Right lobe of liver (tissue), 6 donors: ENCODE measurements at regions of chr5 and their contacts with region 1.

Region 1: GRCh38 chr5:174793684-174794328 is 69.4 kb downstream of the MSX2 start:
- DNase-seq: peak; percentile 54 to 64 (median 59)
- ATAC-seq: peak; percentile 80 to 92 (median 85)
- H3K4me3 ChIP-seq: no peak overlapping the region
- H3K27ac ChIP-seq: no peak overlapping the region
- H3K4me1 ChIP-seq: no peaks in the 10 kb centered on the region
- H3K27me3 ChIP-seq: peaks cover 0 to 12% of the 10 kb centered on the region in 2 donors
- CTCF ChIP-seq: peak; percentile 63 to 86 (median 79)
- POLR2A ChIP-seq: no peak

Region 2: DNA sequence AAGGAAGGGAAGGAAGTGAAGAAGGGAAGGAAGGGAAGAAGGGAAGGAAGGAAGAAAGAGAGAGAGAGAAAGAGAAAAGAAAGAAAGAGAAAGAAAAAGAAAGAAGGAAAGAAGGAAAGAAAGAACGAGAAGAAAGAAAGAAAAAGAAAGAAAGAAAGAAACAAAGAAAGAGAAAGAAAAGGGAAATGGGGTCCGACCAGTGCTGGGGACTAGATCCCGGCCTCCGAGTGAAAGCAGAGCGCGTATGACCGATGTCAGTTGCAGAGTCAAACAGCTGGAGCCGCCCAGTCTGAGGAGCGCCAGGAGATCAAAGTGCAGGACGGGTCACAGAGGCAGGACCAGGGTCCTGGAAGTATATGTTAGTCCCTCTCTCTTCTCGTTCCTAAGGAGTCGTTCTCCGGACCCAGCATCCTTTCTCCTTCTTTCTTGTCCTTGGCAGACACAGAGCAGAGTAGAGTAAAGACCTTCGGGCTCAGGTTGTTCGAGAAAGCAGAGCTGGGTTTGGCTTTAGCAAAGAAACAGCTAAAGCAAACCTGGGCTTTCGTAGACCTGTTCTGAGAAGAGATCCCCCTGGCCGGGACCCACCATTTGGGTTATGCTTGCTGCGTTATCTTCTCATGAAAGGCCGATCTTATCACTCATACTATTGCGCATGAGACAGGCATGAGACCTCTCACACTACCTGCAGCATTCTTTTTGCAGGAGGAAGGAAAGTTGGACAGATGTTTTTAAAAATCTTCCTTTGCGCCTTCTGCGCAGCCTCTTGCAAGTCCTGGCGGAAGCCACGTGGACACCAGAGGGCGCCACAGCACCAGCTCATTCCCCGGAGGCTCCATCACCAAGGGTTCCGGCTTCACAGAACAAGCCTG is 374.6 kb before region 1 on chr5:
- intact Hi-C with region 1: loop called (anchors 5 to 10 kb)
- DNase-seq: peak; percentile 86 to 88 (median 86)
- ATAC-seq: peak; percentile 92 to 97 (median 94)
- H3K4me3 ChIP-seq: no peak overlapping the region
- H3K27ac ChIP-seq: no peak overlapping the region
- H3K4me1 ChIP-seq: peaks cover 0 to 5% (median 0%) of the 10 kb centered on the region in 4 donors
- H3K27me3 ChIP-seq: no peaks in the 10 kb centered on the region
- CTCF ChIP-seq: peak; percentile 65 to 94 (median 90)
- POLR2A ChIP-seq: no peak

Region 3: DNA sequence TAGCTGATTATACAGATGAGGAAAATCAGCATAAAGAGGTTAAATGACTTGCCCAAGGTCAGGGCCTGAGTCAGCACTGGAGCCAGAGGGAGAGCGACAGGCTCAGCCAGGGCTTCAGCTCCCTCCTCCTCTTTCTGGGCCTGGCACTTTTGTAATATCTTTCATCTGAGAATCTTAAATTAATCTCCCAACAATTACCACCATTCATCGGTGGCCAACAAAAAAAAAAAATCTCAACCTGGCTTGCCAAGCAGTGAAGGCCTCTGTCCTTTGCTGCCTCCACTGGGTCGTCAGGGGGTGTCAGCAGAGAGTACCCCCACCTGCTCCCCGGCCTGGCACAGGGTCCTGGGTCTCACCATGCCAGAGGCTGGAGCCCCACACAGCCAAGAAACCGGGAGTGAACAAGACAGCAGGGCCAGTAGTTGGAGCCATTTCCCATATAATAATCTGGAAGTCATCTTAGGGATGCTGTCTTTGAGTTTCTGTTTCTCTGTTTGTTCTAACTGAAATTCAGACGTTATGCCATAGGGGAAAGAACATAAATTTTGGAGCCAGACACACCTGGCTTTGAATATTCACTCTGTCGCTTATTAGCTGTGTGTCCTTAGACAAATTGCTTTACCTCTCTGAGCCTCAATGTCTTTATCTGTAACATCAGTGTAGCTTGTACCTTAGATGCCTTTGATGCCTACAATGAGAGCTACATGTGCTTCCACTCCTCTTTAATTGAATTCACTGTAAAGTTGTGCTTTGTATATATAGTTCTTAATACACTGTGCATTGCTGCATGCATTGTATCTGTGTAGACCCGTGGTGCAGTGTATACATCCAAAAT is 369.4 kb before region 1 on chr5:
- intact Hi-C with region 1: loop called (anchors 5 to 10 kb)
- DNase-seq: no peak
- ATAC-seq: no peak
- H3K4me3 ChIP-seq: no peak overlapping the region
- H3K27ac ChIP-seq: no peak overlapping the region
- H3K4me1 ChIP-seq: no peaks in the 10 kb centered on the region
- H3K27me3 ChIP-seq: no peaks in the 10 kb centered on the region
- CTCF ChIP-seq: no peak
- POLR2A ChIP-seq: no peak

Region 4: GRCh38 chr5:174849426-174849825 is 55.6 kb after region 1 on chr5:
- intact Hi-C with region 1: no loop called
- DNase-seq: no peak
- ATAC-seq: no peak
- H3K4me3 ChIP-seq: no peak overlapping the region
- H3K27ac ChIP-seq: no peak overlapping the region
- H3K4me1 ChIP-seq: no peaks in the 10 kb centered on the region
- H3K27me3 ChIP-seq: no peaks in the 10 kb centered on the region
- CTCF ChIP-seq: no peak
- POLR2A ChIP-seq: no peak

Region 5: DNA sequence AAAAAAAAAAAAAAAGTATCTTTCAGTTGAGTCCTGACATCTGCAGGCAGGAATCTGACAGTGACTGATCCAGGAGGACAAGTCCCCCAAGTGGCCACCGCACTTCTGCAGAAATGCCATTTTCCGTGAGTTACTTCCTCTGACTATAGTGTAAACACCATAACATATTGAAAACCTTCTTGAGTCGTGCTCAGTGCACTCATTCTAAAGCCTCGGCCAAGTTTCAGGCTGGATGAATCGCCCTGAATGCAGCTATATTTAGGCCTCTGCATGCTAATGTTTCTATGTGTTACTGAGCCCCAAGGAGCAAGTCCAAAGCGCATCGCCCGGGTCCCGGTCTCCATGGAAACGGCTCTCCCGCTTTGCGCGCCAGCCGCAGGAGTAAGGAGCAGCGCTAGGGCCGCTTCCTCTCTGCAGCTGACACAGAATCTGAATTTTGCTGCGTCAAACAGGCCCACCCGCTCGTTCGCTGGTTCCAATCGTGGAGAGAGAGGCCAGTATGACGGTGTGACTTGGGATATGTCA is 265.9 kb after region 1 on chr5:
- intact Hi-C with region 1: no loop called
- DNase-seq: peak; percentile 28 to 57 (median 46)
- ATAC-seq: peak; percentile 43 to 63 (median 49)
- H3K4me3 ChIP-seq: no peak overlapping the region
- H3K27ac ChIP-seq: no peak overlapping the region
- H3K4me1 ChIP-seq: no peaks in the 10 kb centered on the region
- H3K27me3 ChIP-seq: no peaks in the 10 kb centered on the region
- CTCF ChIP-seq: peak in 2 of 4 donors; percentile 11 to 17
- POLR2A ChIP-seq: no peak

Region 6: DNA sequence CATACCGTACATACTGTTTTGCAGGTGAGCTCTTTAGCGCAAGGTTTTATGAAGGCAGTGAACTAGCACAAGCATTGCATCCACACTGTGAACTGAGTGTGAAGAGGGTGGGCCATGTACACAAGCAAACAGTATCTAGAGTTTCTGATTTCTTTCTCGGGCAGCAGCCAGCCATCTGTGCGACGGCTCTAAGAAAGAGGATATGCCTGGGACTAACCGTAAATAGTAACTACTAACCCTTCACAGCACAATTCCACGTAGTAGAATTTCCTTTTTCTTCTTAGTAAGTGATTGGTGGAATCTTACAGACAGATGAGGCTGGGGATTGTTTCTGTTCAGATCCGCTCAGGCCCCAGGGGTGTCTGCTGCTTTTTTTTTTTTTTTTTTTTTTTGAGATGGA is 561.2 kb after region 1 on chr5:
- intact Hi-C with region 1: no loop called
- DNase-seq: no peak
- ATAC-seq: no peak
- H3K4me3 ChIP-seq: no peak overlapping the region
- H3K27ac ChIP-seq: no peak overlapping the region
- H3K4me1 ChIP-seq: no peaks in the 10 kb centered on the region
- H3K27me3 ChIP-seq: no peaks in the 10 kb centered on the region
- CTCF ChIP-seq: no peak
- POLR2A ChIP-seq: no peak